ENCODE measurements at regions of chr14 and their contacts with region 1.

Region 1: GRCh38 chr14:80987235-80988032 is 32.0 kb downstream of the TSHR start:
- DNase-seq: peak; percentile 80
- H3K4me3 Mint-ChIP-seq: no peak overlapping the region
- H3K27ac Mint-ChIP-seq: no peak overlapping the region
- H3K4me1 Mint-ChIP-seq: no peaks in the 10 kb centered on the region
- H3K27me3 Mint-ChIP-seq: peaks cover 10% of the 10 kb centered on the region

Region 2: GRCh38 chr14:80213599-80213998 is 773.8 kb before region 1 on chr14:
- CTCF ChIA-PET with region 1: no interaction called
- intact Hi-C with region 1: loop called (anchors 1 kb)
- DNase-seq: peak; percentile 13
- H3K4me3 Mint-ChIP-seq: no peak overlapping the region
- H3K27ac Mint-ChIP-seq: no peak overlapping the region
- H3K4me1 Mint-ChIP-seq: peaks cover 4% of the 10 kb centered on the region
- H3K27me3 Mint-ChIP-seq: peaks cover 2% of the 10 kb centered on the region

Region 3: GRCh38 chr14:80930836-80931389 is 56.5 kb before region 1 on chr14:
- CTCF ChIA-PET with region 1: interaction called, 15 read pairs
- intact Hi-C with region 1: loop called (anchors 1 kb)
- DNase-seq: peak; percentile 79
- H3K4me3 Mint-ChIP-seq: peak overlapping the region; percentile 33
- H3K27ac Mint-ChIP-seq: peak overlapping the region; percentile 73
- H3K4me1 Mint-ChIP-seq: peaks cover 23% of the 10 kb centered on the region
- H3K27me3 Mint-ChIP-seq: no peaks in the 10 kb centered on the region

Region 4: GRCh38 chr14:80954687-80955299 is 32.6 kb before region 1 on chr14:
- CTCF ChIA-PET with region 1: interaction called, 82 read pairs
- intact Hi-C with region 1: loop called (anchors 1 kb)
- DNase-seq: peak; percentile 81
- H3K4me3 Mint-ChIP-seq: peak overlapping the region; percentile 75
- H3K27ac Mint-ChIP-seq: no peak overlapping the region
- H3K4me1 Mint-ChIP-seq: peaks cover 32% of the 10 kb centered on the region
- H3K27me3 Mint-ChIP-seq: peaks cover 10% of the 10 kb centered on the region

Region 5: GRCh38 chr14:81164167-81164774 is 176.8 kb after region 1 on chr14:
- CTCF ChIA-PET with region 1: interaction called, 29 read pairs
- intact Hi-C with region 1: loop called (anchors 1 kb)
- DNase-seq: peak; percentile 87
- H3K4me3 Mint-ChIP-seq: no peak overlapping the region
- H3K27ac Mint-ChIP-seq: no peak overlapping the region
- H3K4me1 Mint-ChIP-seq: peaks cover 10% of the 10 kb centered on the region
- H3K27me3 Mint-ChIP-seq: no peaks in the 10 kb centered on the region

Measured in activated naive CD4-positive, alpha-beta T cell treated with anti-CD3 and anti-CD28 coated beads for 36 hours (primary cell).